ENCODE measurements at regions of chr17 and their contacts with region 1.

Region 1: GRCh38 chr17:82536512-82537201 is 17.1 kb downstream of the FOXK2 start:
- DNase-seq: no peak
- ATAC-seq: no peak
- H3K4me3 ChIP-seq: no peak overlapping the region
- H3K4me3 Mint-ChIP-seq: peak overlapping the region in 2 of 3 donors; percentile 37 to 51
- H3K27ac ChIP-seq: no peak overlapping the region
- H3K27ac Mint-ChIP-seq: peak overlapping the region; percentile 74 to 80
- H3K4me1 ChIP-seq: peaks cover under 1 to 34% of the 10 kb centered on the region in 2 experiments
- H3K4me1 Mint-ChIP-seq: peaks cover 52 to 67% (median 65%) of the 10 kb centered on the region in 3 donors
- H3K27me3 ChIP-seq: no peaks in the 10 kb centered on the region
- H3K27me3 Mint-ChIP-seq: no peaks in the 10 kb centered on the region

Region 2: GRCh38 chr17:82518826-82519810 is 17.5 kb before region 1 on chr17 and contains the start of gene FOXK2:
- CTCF ChIA-PET with region 1: interaction called in 1 of 2 experiments, 3 read pairs
- POLR2A ChIA-PET with region 1: interaction called in 1 of 2 experiments, 15 read pairs
- DNase-seq: peak; percentile 81 to 97 (median 91)
- ATAC-seq: peak; percentile 98 to 99 (median 99)
- H3K4me3 ChIP-seq: peak within 1 kb of the TSS; percentile 51 to 64
- H3K4me3 Mint-ChIP-seq: peak within 1 kb of the TSS; percentile 87 to 99 (median 88)
- H3K27ac ChIP-seq: peak within 1 kb of the TSS; percentile 58
- H3K27ac Mint-ChIP-seq: peak within 1 kb of the TSS; percentile 72 to 83
- H3K4me1 ChIP-seq: peaks cover 7 to 39% of the 10 kb centered on the region in 2 experiments
- H3K4me1 Mint-ChIP-seq: peaks cover 27 to 29% (median 27%) of the 10 kb centered on the region in 3 donors
- H3K27me3 ChIP-seq: no peaks in the 10 kb centered on the region
- H3K27me3 Mint-ChIP-seq: no peaks in the 10 kb centered on the region
- total RNA-seq, gene FOXK2: 45.8 to 65.5 (median 61.9) TPM

Region 3: DNA sequence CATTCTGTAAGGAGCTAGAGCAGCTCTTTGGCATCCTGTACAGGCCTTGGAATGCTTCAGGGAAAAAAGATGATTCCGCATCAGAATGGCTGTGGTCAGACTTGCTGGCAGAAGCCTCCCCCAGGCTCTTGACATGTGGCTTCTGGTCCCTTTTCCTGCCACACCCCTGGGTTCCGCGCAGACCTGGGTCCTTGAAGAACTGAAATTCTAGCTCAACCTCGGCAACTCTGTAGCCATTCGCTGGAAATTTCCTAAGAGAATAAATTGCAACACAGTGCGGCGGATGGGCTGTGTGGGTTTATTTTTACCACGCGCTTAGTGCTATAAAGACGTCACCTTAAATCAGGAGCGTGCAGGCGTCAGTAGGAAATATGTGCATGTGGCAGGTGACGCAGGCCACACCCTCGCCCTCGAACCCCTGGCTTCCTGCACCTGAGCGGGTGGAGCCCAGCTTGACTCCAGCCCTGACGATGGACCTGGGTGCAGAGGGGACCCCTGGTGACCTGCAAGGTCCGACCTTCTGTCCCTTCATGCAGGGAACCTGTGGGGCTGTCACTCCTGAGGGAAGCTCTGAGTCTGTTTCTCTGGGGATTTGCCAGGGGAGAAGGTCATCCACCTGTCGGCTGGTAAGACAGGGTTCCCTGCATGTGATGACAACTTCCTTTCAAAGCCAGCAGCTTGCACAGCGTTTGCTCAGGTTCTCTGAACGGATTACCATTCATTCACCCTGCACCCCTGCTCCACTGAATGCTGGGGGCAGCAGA is 589.0 kb after region 1 on chr17:
- CTCF ChIA-PET with region 1: no interaction called
- POLR2A ChIA-PET with region 1: no interaction called
- DNase-seq: peak in 27 of 35 experiments; percentile 10 to 64 (median 30)
- ATAC-seq: peak in 2 of 4 experiments; percentile 53 to 85
- H3K4me3 ChIP-seq: no peak overlapping the region
- H3K4me3 Mint-ChIP-seq: peak overlapping the region; percentile 21 to 70 (median 36)
- H3K27ac ChIP-seq: no peak overlapping the region
- H3K27ac Mint-ChIP-seq: no peak overlapping the region
- H3K4me1 ChIP-seq: peaks cover 0 to 25% of the 10 kb centered on the region in 2 experiments
- H3K4me1 Mint-ChIP-seq: peaks cover 12 to 28% (median 24%) of the 10 kb centered on the region in 3 donors
- H3K27me3 ChIP-seq: peaks cover 0 to 59% of the 10 kb centered on the region in 2 experiments
- H3K27me3 Mint-ChIP-seq: peaks cover 23 to 37% of the 10 kb centered on the region in 2 donors

Measured in T-cell (primary cell).